HEK293T (cell line): ENCODE measurements at regions of chr3 and their contacts with region 1.

Region 1: DNA sequence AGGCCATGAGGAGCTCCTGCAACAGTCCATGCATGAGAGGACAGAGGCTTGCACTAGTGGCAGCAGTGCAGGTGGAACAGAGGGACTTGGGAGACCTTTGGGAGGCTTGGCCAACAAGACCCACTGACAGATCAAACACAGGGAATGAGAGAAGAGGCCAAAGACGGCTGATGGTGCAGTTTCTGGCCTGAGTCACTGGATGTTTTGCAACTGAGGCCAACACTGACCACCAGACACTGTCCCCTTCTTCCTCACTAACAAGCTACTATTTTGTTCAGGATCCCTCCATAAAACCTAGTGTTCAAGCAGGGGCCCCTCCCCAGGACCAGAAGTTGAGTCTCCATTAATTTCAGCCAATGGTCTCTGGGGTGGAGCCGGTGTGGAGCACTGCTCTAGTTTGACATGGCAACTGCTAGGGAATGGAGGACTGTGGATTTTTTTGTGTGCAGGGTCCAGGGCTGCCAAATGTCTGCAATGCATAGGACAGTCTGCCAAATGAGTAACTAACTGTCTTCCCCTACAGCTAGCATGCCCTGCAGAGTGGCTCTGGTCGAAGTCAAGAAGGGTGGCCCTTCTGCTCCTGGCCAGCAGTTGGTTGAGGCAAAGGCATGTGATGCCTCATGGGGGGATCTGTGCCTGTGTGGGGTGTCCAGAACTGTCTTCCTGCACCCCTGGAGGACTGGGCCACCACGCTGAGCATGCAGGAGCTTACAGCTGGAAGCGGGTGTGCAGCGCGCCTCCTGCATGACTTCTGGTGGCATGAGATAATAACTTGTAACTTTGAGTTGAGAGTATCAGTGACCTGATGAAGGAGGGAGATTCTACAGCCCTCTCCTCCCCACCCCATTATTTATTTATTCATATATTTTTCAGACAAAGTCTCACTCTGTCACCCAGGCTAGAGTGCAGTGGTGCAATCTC is 4.8 kb downstream of the TPRA1 start:
- DNase-seq: no peak

Region 2: GRCh38 chr3:127574880-127575878 is 10.6 kb before region 1 on chr3:
- CTCF ChIA-PET with region 1: interaction called, 10 read pairs
- POLR2A ChIA-PET with region 1: no interaction called
- DNase-seq: peak; percentile 95

Region 3: DNA sequence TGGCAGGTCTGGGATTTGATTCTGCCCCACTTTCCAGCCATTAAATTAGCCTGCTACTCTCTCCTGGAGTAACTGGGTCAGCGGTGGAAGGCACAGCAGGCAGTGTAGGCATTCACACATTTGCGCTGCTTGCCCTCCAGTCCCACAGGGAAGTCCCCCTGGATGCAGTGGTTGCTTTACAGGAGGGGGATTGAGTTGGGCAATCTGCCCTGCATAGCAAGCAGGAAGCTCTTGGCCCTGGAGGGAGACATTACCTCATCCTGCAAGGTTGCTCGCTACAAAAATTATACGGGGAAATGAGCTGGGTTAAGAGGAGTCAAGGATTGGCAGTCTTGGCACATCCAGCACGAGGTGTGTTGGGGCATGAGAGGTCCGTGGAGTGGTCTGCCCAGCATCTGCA is 27.2 kb after region 1 on chr3:
- CTCF ChIA-PET with region 1: no interaction called
- POLR2A ChIA-PET with region 1: no interaction called
- DNase-seq: no peak